ENCODE measurements at regions of chr5 and their contacts with region 1.

Region 1: DNA sequence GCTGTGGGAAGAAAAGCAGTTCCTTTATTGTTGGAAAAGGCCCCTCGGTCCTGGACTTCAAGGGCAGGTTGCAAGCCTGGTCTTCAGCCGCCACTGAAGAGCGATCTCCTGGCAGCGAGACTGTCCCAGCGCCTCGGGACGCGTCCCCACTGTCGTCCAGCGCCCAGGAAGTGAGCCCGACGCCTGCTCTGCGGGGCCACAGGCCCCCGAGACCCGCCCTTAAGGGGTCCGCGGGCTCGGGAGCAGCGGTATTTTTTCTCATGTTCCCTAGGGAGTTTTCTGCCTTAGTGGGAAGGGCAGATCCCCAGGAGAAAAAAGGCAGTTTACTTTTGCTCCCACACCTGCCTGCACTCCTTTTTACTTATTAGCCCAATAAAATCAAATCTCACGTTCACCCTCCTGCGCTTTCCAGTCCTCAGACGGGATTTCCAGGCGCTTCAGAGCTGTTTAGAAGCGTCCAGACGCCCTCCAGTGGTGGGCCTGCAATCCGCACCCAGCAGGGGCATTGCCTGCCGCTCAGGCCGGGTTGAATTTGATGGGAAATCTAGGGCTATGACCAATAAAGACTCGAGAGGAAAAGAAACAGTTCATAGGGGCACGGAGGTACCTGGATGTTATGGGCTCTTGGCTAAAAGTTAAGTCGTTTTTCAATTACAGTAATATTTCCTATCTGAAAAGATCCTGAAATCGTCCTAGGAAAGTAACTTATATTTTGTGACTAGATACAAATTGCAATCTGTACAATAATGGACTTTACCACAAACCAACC is 2.8 kb upstream of the EFNA5 start:
- DNase-seq: peak; percentile 59
- ATAC-seq: peak; percentile 72
- H3K4me3 ChIP-seq: peak overlapping the region; percentile 69
- H3K27ac ChIP-seq: peak overlapping the region; percentile 26; the same call in 1 of the 2 replicates
- H3K4me1 ChIP-seq: peaks cover 10% of the 10 kb centered on the region
- H3K27me3 ChIP-seq: peaks cover 0 to 4% of the 10 kb centered on the region in 2 experiments; a peak in 2 of 4 replicates
- CTCF ChIP-seq: peak; percentile 96 to 99 (median 97)
- EP300 ChIP-seq: no peak
- POLR2A ChIP-seq: no peak
- RAD21 ChIP-seq: peak; percentile 98

Region 2: DNA sequence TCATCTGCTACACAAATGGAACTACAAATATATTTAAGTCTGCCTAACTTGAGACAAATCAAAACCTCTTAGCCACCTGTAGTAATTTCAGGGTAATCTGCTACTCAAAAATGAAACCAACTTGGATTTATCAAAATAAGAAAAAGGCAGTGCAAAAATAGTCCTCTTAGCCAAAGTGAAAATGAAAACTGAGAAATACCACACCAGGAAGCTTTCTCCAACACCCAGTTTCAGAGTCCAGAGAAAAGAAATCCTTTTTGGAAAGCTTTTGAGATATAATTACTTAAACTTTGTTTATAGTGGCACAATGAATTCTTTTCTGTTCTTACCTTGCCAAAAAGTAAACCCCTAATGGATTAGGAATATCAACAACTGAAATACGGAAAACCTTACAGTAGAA is 993.2 kb before region 1 on chr5:
- CTCF ChIA-PET with region 1: no interaction called
- POLR2A ChIA-PET with region 1: no interaction called
- RAD21 ChIA-PET with region 1: no interaction called
- SMC1A ChIA-PET with region 1: no interaction called
- in situ Hi-C with region 1: no loop called
- intact Hi-C with region 1: loop called (anchors 10 kb)
- DNase-seq: peak; percentile 27
- ATAC-seq: peak; percentile 80
- H3K4me3 ChIP-seq: 0 out of 2 replicates have a peak overlapping the region, but pooled peaks have one; percentile 12
- H3K27ac ChIP-seq: peak overlapping the region; percentile 33; the same call in 1 of the 2 replicates
- H3K4me1 ChIP-seq: peaks cover 3% of the 10 kb centered on the region; the same call in 1 of the 2 replicates
- H3K27me3 ChIP-seq: no peaks in the 10 kb centered on the region
- CTCF ChIP-seq: no peak
- EP300 ChIP-seq: no peak
- POLR2A ChIP-seq: no peak
- RAD21 ChIP-seq: no peak

Region 3: GRCh38 chr5:107257885-107258520 is 415.5 kb before region 1 on chr5:
- CTCF ChIA-PET with region 1: no interaction called
- POLR2A ChIA-PET with region 1: no interaction called
- RAD21 ChIA-PET with region 1: interaction called, 3 read pairs
- SMC1A ChIA-PET with region 1: no interaction called
- in situ Hi-C with region 1: no loop called
- intact Hi-C with region 1: loop called (anchors 5 kb)
- DNase-seq: peak; percentile 20
- ATAC-seq: peak; percentile 60
- H3K4me3 ChIP-seq: no peak overlapping the region
- H3K27ac ChIP-seq: no peak overlapping the region
- H3K4me1 ChIP-seq: peaks cover 1% of the 10 kb centered on the region; the same call in 1 of the 2 replicates
- H3K27me3 ChIP-seq: no peaks in the 10 kb centered on the region
- CTCF ChIP-seq: no peak
- EP300 ChIP-seq: no peak
- POLR2A ChIP-seq: no peak
- RAD21 ChIP-seq: no peak

Region 4: GRCh38 chr5:107365320-107366109 is 308.0 kb before region 1 on chr5:
- CTCF ChIA-PET with region 1: interaction called, 8 read pairs
- POLR2A ChIA-PET with region 1: no interaction called
- RAD21 ChIA-PET with region 1: no interaction called
- SMC1A ChIA-PET with region 1: interaction called, 3 read pairs
- in situ Hi-C with region 1: no loop called
- intact Hi-C with region 1: loop called (anchors 2 kb)
- DNase-seq: peak; percentile 92
- ATAC-seq: peak; percentile 81
- H3K4me3 ChIP-seq: 0 out of 2 replicates have a peak overlapping the region, but pooled peaks have one; percentile 6
- H3K27ac ChIP-seq: peak overlapping the region; percentile 47
- H3K4me1 ChIP-seq: peaks cover 21% of the 10 kb centered on the region
- H3K27me3 ChIP-seq: no peaks in the 10 kb centered on the region
- CTCF ChIP-seq: 0 out of 6 replicates have a peak, but pooled peaks of 1 of the 3 experiments have one; percentile 3
- EP300 ChIP-seq: peak; percentile 12 to 32; a peak in 2 of 4 replicates
- POLR2A ChIP-seq: no peak
- RAD21 ChIP-seq: no peak

Region 5: GRCh38 chr5:107687937-107688336 is 14.4 kb after region 1 on chr5:
- CTCF ChIA-PET with region 1: interaction called, 11 read pairs
- POLR2A ChIA-PET with region 1: no interaction called
- RAD21 ChIA-PET with region 1: interaction called, 3 read pairs
- SMC1A ChIA-PET with region 1: interaction called, 3 read pairs
- in situ Hi-C with region 1: no loop called
- intact Hi-C with region 1: no loop called
- DNase-seq: no peak
- ATAC-seq: no peak
- H3K4me3 ChIP-seq: no peak overlapping the region
- H3K27ac ChIP-seq: no peak overlapping the region
- H3K4me1 ChIP-seq: no peaks in the 10 kb centered on the region
- H3K27me3 ChIP-seq: no peaks in the 10 kb centered on the region
- CTCF ChIP-seq: no peak
- EP300 ChIP-seq: no peak
- POLR2A ChIP-seq: no peak
- RAD21 ChIP-seq: no peak

Region 6: GRCh38 chr5:108345541-108346171 is 672.1 kb after region 1 on chr5:
- CTCF ChIA-PET with region 1: interaction called, 9 read pairs
- POLR2A ChIA-PET with region 1: no interaction called
- RAD21 ChIA-PET with region 1: interaction called, 4 read pairs
- SMC1A ChIA-PET with region 1: no interaction called
- in situ Hi-C with region 1: no loop called
- intact Hi-C with region 1: loop called (anchors 5 kb)
- DNase-seq: peak; percentile 5
- ATAC-seq: peak; percentile 86
- H3K4me3 ChIP-seq: no peak overlapping the region
- H3K27ac ChIP-seq: no peak overlapping the region
- H3K4me1 ChIP-seq: no peaks in the 10 kb centered on the region
- H3K27me3 ChIP-seq: no peaks in the 10 kb centered on the region
- CTCF ChIP-seq: peak; percentile 19 to 55 (median 30); a peak in 3 of 6 replicates
- EP300 ChIP-seq: no peak
- POLR2A ChIP-seq: no peak
- RAD21 ChIP-seq: peak; percentile 48